Motor neuron (in vitro differentiated cells): ENCODE measurements at regions of chr6 and their contacts with region 1.

Region 1: GRCh38 chr6:8063761-8064637 is at the start of gene BLOC1S5:
- ATAC-seq: peak; percentile 90 to 96 (median 95)
- H3K4me3 ChIP-seq: peak within 1 kb of the TSS; percentile 62 to 79 (median 67)
- H3K27ac ChIP-seq: peak within 1 kb of the TSS; percentile 57 to 67
- H3K4me1 ChIP-seq: peaks cover 3 to 14% of the 10 kb centered on the region in 2 donors
- total RNA-seq, gene BLOC1S5: 10.9 to 21.1 (median 12.2) TPM

Region 2: GRCh38 chr6:7899101-7899888 is 164.7 kb before region 1 on chr6:
- in situ Hi-C with region 1: loop called in 1 of 9 experiments (anchors 25 kb)
- ATAC-seq: peak in 1 of 8 experiments; percentile 29
- H3K4me3 ChIP-seq: no peak overlapping the region
- H3K27ac ChIP-seq: no peak overlapping the region
- H3K4me1 ChIP-seq: no peaks in the 10 kb centered on the region